ENCODE measurements at regions of chr15 and their contacts with region 1.

Region 1: DNA sequence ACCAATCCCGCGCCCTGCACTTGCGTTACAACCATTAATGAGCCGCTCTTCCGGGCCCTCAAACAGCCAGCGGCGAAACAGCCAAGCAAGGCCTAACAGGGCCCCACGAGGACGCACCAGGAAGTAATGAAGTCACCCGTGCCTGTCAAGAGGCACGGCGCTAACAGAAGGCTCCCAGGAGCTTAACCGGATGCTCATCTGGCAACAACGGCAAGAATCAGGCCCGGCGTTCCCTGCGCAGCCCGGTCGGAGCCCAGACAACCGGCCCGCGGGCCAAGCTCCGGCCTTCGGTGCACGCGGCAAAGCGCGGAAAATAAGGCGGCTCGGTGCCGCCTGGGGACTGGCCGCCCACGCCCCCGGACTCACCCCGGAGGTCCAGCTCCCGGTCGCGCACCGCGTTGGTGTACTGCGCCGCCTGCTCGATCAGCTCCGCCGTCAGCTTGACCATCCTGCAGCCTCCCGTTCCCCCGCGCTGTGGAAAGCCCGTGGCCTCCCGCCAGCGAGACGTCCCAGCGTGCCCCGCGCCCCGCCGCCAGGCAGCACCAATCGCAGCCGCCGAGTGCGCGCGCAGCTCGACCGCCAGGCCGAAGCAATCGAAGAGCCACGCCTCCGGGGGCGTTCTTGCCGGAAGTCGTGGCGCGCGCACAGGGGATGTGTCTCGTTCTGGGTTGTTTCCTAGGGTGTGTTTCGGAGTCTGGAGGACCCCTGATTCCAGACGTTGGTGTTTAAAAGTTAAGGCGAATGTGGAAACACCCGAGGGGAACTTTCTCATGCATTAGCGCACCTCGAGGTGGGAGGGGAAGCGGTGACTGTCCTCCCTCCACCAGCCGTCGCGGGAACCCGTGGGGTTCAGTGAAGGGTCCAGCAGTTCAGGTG is at the start of gene SNRPA1:
- DNase-seq: peak; percentile 94
- H3K4me3 Mint-ChIP-seq: peak within 1 kb of the TSS; percentile 79
- H3K27ac Mint-ChIP-seq: peak within 1 kb of the TSS; percentile 92
- H3K4me1 Mint-ChIP-seq: peaks cover 27% of the 10 kb centered on the region
- H3K27me3 Mint-ChIP-seq: no peaks in the 10 kb centered on the region
- CTCF ChIP-seq: no peak
- total RNA-seq, gene SNRPA1: 99.4 and 99.5 TPM in 2 replicates

Region 2: DNA sequence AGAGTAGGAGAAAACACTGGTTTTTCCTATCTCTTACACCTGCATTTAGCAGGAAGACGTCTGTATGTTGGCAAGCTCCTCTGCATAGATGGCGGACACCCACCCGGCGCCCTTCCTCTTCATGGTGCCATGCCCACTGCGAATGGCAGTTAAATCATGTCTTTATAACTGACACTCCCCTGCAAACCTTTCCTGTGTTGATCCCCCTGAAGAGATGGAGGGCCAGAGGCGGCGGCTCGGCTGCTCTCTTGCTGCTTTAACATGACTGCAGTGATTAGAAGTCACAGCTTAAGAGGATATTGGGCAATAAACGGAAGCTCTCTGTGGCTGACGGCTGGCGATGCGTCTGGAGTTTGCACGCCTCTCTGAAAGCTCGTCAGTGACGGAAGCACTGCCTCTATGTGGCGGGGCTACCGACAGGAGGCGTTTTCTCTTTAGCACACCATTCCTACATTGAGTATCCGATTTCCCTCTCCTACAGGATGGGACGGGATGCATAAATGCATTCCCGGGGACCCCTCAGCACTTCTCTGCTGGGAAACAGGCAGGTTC is 25.6 kb after region 1 on chr15:
- CTCF ChIA-PET with region 1: interaction called, 4 read pairs
- POLR2A ChIA-PET with region 1: interaction called, 22 read pairs
- intact Hi-C with region 1: no loop called
- DNase-seq: no peak
- H3K4me3 Mint-ChIP-seq: no peak overlapping the region
- H3K27ac Mint-ChIP-seq: no peak overlapping the region
- H3K4me1 Mint-ChIP-seq: peaks cover 14% of the 10 kb centered on the region
- H3K27me3 Mint-ChIP-seq: no peaks in the 10 kb centered on the region
- CTCF ChIP-seq: no peak

Region 3: GRCh38 chr15:101358895-101359294 is 63.9 kb after region 1 on chr15:
- CTCF ChIA-PET with region 1: interaction called, 4 read pairs
- POLR2A ChIA-PET with region 1: interaction called, 23 read pairs
- intact Hi-C with region 1: loop called (anchors 2 kb)
- DNase-seq: peak; percentile 94
- H3K4me3 Mint-ChIP-seq: no peak overlapping the region
- H3K27ac Mint-ChIP-seq: peak overlapping the region; percentile 33
- H3K4me1 Mint-ChIP-seq: peaks cover 47% of the 10 kb centered on the region
- H3K27me3 Mint-ChIP-seq: no peaks in the 10 kb centered on the region
- CTCF ChIP-seq: no peak

Region 4: DNA sequence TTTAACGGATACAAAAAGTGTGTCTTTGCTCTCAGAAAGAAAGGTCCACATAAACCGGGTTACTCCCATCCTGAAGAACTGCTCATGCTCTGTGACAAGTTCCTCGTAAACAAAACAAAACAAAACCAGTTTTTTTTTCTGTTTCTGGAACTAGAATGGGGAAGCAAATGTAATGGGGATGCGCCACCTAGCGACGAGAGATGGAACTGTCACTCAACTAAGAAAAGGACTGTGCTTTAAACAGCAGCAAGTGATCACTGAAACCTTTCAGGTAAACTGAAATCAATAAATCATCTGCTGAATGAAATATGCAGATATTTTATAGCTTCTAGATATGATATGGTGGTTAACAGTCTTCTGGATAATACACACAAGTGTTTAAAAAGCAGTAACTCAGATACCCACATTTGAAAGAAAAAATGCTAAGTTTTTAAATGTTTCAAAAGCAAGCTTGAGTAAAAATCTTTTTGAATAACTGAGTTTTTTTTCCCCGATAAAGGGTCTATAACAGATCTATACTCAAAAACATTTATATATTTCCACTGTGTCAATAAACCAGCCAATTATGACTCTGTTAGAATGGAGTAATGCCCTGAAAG is 346.3 kb after region 1 on chr15:
- CTCF ChIA-PET with region 1: interaction called, 320 read pairs
- POLR2A ChIA-PET with region 1: interaction called, 102 read pairs
- intact Hi-C with region 1: loop called (anchors 1 kb)
- DNase-seq: peak; percentile 71
- H3K4me3 Mint-ChIP-seq: no peak overlapping the region
- H3K27ac Mint-ChIP-seq: peak overlapping the region; percentile 27
- H3K4me1 Mint-ChIP-seq: peaks cover 28% of the 10 kb centered on the region
- H3K27me3 Mint-ChIP-seq: no peaks in the 10 kb centered on the region
- CTCF ChIP-seq: peak; percentile 89

Region 5: GRCh38 chr15:101652098-101652782 is 357.3 kb after region 1 on chr15 and contains the start of gene TM2D3:
- CTCF ChIA-PET with region 1: interaction called, 6 read pairs
- POLR2A ChIA-PET with region 1: interaction called, 39 read pairs
- intact Hi-C with region 1: no loop called
- DNase-seq: peak; percentile 90
- H3K4me3 Mint-ChIP-seq: peak within 1 kb of the TSS; percentile 71
- H3K27ac Mint-ChIP-seq: peak within 1 kb of the TSS; percentile 60
- H3K4me1 Mint-ChIP-seq: no peaks in the 10 kb centered on the region
- H3K27me3 Mint-ChIP-seq: no peaks in the 10 kb centered on the region
- CTCF ChIP-seq: peak; percentile 71
- total RNA-seq, gene TM2D3: 25.7 and 26.2 TPM in 2 replicates

Measured in MCF 10A (cell line).